Calu3 (cell line): ENCODE measurements at regions of chr11 and their contacts with region 1.

Region 1: DNA sequence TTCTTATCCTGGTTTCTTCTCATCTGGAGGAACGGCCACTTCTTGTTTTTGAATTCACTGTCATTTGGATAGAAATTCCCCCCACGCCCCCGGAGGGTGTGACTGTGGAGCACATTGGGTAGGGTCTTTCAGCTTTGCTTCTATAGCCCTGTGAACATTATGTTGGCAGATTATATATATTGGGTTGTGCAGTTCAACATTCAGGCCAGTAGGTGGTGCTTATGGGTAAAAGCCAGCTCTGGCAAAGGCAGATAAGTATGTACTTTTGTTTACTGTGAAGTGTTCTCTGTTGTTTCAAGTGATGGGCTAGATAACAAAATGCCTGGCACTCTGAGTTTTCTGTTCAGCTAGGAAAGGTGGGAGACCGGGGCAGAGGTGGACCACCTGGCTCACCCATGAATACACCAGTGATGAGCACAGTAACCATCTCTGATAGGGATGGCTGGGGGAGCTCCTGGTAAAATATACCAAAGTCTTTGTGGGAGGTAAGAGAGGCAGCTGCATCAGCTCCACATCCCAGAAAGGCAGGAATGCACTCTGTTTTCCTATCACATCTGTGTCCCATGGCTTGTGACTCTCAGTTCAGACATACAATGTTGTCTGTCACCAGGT is 1348.2 kb upstream of the RAG2 start:
- DNase-seq: peak; percentile 62
- H3K4me3 Mint-ChIP-seq: no peak overlapping the region
- H3K27ac Mint-ChIP-seq: no peak overlapping the region
- H3K4me1 Mint-ChIP-seq: no peaks in the 10 kb centered on the region
- H3K27me3 Mint-ChIP-seq: no peaks in the 10 kb centered on the region
- CTCF ChIP-seq: peak; percentile 72

Region 2: GRCh38 chr11:37657645-37658044 is 288.6 kb before region 1 on chr11:
- CTCF ChIA-PET with region 1: no interaction called
- intact Hi-C with region 1: loop called (anchors 10 kb)
- DNase-seq: no peak
- H3K4me3 Mint-ChIP-seq: no peak overlapping the region
- H3K27ac Mint-ChIP-seq: no peak overlapping the region
- H3K4me1 Mint-ChIP-seq: no peaks in the 10 kb centered on the region
- H3K27me3 Mint-ChIP-seq: no peaks in the 10 kb centered on the region
- CTCF ChIP-seq: no peak

Region 3: GRCh38 chr11:38182126-38182866 is 236.0 kb after region 1 on chr11:
- CTCF ChIA-PET with region 1: no interaction called
- intact Hi-C with region 1: loop called (anchors 10 kb)
- DNase-seq: no peak
- H3K4me3 Mint-ChIP-seq: no peak overlapping the region
- H3K27ac Mint-ChIP-seq: no peak overlapping the region
- H3K4me1 Mint-ChIP-seq: peaks cover 21% of the 10 kb centered on the region
- H3K27me3 Mint-ChIP-seq: no peaks in the 10 kb centered on the region
- CTCF ChIP-seq: no peak

Region 4: DNA sequence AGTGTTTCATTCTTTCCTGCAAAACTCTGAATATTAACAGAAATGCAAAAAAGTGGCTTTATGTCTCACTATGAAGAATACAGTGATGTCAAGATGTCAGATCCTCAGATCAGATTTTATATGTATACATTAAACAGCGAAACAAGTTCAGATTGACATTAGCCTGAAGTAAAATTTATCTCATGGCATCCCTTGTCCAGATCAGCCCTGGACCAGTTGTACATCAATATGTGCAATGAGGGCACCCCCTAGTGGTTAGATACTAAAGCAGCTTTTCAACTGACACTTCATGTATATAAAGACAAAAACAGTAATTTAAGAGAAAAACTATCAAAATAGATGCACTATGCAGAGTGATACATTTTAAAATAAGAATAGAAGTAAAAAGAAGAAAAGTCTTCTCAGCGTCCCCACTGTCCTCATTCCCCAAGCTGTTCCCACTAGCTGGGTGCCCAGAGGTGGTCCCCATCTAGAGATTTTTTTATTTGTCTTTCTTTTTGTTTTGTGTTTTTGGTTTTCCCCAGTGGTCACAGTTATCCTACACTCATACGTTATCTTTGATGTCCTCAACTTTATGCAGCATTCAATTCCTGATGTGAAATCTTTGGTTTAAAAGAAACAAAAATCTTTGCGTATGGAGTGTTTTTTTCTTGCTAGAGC is 845.2 kb after region 1 on chr11:
- CTCF ChIA-PET with region 1: no interaction called
- intact Hi-C with region 1: loop called (anchors 2 kb)
- DNase-seq: peak; percentile 56
- H3K4me3 Mint-ChIP-seq: no peak overlapping the region
- H3K27ac Mint-ChIP-seq: no peak overlapping the region
- H3K4me1 Mint-ChIP-seq: no peaks in the 10 kb centered on the region
- H3K27me3 Mint-ChIP-seq: no peaks in the 10 kb centered on the region
- CTCF ChIP-seq: peak; percentile 64